ENCODE measurements at regions of chr1 and their contacts with region 1.

Region 1: DNA sequence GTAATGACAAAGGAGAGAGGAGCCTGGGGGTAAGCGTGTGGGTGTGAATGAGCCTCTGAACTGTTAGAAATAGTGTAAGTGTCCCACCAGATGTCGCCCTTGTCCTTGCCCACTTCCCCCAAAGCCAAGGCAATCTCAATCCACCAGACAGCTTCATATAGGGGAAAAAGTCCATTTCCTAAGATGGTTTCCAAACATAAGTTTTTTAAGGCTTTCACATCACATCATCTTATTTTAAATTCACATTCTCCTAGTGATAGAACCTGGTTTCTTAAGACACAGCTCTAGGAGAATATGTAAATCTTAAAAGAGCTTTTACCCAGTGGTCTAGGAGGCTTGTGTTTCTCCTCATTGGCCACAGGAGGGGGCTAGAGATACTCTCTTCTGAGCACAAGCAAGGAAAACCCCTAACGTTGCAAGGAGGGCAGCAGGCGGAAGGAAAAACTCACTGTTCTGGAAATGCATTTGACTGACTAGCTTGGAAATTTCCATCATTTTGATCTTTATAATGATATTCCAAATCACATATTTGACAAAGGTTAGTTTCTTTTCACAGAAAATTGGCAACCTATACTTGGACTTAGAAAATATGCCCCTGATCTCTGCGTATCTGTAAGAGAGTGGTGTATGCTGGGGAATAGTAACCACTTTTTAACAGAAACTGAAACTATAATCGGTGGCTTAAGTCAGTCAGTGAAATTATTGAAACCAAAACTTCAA is 51.9 kb upstream of the LPAR3 start:
- DNase-seq: peak; percentile 90
- ATAC-seq: peak; percentile 96
- H3K4me3 ChIP-seq: 0 out of 4 replicates have a peak overlapping the region, but pooled peaks of 1 of the 2 experiments have one; percentile 5
- H3K27ac ChIP-seq: peak overlapping the region; percentile 65; the same call in 1 of the 2 replicates
- H3K4me1 ChIP-seq: peaks cover 16 to 25% of the 10 kb centered on the region in 2 experiments
- H3K27me3 ChIP-seq: no peaks in the 10 kb centered on the region
- CTCF ChIP-seq: peak; percentile 70 to 99 (median 91)
- POLR2A ChIP-seq: no peak
- RAD21 ChIP-seq: peak; percentile 87

Region 2: DNA sequence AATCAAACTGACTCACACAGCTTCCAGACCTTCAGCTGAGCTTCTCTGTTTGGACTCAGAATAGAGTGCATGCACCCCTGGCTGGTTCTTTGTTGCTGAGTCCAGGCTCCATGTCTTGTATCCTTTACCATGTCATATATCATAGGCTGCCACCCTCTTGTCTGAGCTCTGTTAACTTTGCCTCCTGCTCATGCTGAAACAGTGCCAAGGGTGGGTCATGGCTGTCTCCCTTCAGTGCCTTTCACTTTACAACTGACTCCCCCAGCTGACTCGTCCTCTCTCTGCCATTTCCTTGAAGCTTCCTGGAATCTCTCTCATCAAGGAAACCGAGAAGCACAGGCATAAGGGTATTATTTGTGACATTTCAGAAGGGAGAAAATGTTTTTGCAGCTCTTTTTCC is 1831.3 kb before region 1 on chr1:
- CTCF ChIA-PET with region 1: no interaction called
- POLR2A ChIA-PET with region 1: no interaction called
- RAD21 ChIA-PET with region 1: no interaction called
- intact Hi-C with region 1: no loop called
- DNase-seq: no peak
- ATAC-seq: no peak
- H3K4me3 ChIP-seq: no peak overlapping the region
- H3K27ac ChIP-seq: no peak overlapping the region
- H3K4me1 ChIP-seq: no peaks in the 10 kb centered on the region
- H3K27me3 ChIP-seq: no peaks in the 10 kb centered on the region
- CTCF ChIP-seq: no peak
- POLR2A ChIP-seq: no peak
- RAD21 ChIP-seq: no peak

Region 3: DNA sequence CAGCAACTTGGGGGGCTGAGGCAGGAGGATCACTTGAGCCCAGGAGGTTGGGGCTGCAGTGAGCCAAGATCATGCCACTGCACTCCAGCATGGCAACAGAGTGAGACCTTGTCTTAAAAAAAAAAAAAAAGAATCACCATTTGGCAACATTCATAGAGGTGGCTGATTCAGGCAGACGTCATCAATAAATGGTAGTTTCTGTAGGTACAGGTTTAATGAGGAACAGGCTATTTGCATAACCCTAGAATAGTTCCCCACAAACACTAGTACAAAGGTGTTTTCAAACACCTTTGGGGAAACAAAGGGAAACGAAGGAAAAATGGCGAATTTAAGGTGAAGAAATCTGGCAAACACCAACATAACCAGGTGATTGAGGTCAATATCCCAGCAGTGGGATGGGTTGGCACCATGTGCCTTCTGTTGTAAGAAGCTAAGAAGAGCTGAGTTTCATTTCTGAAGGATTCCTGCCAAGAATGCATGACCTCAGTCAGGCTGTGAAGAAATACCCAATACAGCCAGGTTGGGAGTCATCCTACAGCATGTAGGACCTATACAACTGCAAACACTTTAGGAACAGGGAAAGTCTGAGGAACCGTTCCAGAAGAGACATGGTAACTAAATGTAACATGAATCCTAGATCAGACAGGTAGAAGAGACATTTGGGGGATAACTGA is 57.5 kb before region 1 on chr1:
- CTCF ChIA-PET with region 1: no interaction called
- POLR2A ChIA-PET with region 1: no interaction called
- RAD21 ChIA-PET with region 1: no interaction called
- intact Hi-C with region 1: no loop called
- DNase-seq: no peak
- ATAC-seq: no peak
- H3K4me3 ChIP-seq: no peak overlapping the region
- H3K27ac ChIP-seq: no peak overlapping the region
- H3K4me1 ChIP-seq: peaks cover 0 to 9% of the 10 kb centered on the region in 2 experiments; a peak in 1 of 4 replicates
- H3K27me3 ChIP-seq: no peaks in the 10 kb centered on the region
- CTCF ChIP-seq: no peak
- POLR2A ChIP-seq: no peak
- RAD21 ChIP-seq: no peak

Region 4: GRCh38 chr1:84957966-84958365 is 13.0 kb after region 1 on chr1:
- CTCF ChIA-PET with region 1: interaction called, 12 read pairs
- POLR2A ChIA-PET with region 1: no interaction called
- RAD21 ChIA-PET with region 1: interaction called in 1 of 2 experiments, 3 read pairs
- intact Hi-C with region 1: no loop called
- DNase-seq: no peak
- ATAC-seq: no peak
- H3K4me3 ChIP-seq: no peak overlapping the region
- H3K27ac ChIP-seq: no peak overlapping the region
- H3K4me1 ChIP-seq: no peaks in the 10 kb centered on the region
- H3K27me3 ChIP-seq: no peaks in the 10 kb centered on the region
- CTCF ChIP-seq: no peak
- POLR2A ChIP-seq: no peak
- RAD21 ChIP-seq: no peak

Region 5: GRCh38 chr1:85109475-85109874 is 164.5 kb after region 1 on chr1:
- CTCF ChIA-PET with region 1: interaction called, 33 read pairs
- POLR2A ChIA-PET with region 1: no interaction called
- RAD21 ChIA-PET with region 1: interaction called, 7 to 8 read pairs
- intact Hi-C with region 1: loop called (anchors 10 kb)
- DNase-seq: peak; percentile 53
- ATAC-seq: peak; percentile 100
- H3K4me3 ChIP-seq: no peak overlapping the region
- H3K27ac ChIP-seq: no peak overlapping the region
- H3K4me1 ChIP-seq: no peaks in the 10 kb centered on the region
- H3K27me3 ChIP-seq: no peaks in the 10 kb centered on the region
- CTCF ChIP-seq: peak; percentile 77 to 86 (median 85)
- POLR2A ChIP-seq: no peak
- RAD21 ChIP-seq: peak; percentile 89

Region 6: DNA sequence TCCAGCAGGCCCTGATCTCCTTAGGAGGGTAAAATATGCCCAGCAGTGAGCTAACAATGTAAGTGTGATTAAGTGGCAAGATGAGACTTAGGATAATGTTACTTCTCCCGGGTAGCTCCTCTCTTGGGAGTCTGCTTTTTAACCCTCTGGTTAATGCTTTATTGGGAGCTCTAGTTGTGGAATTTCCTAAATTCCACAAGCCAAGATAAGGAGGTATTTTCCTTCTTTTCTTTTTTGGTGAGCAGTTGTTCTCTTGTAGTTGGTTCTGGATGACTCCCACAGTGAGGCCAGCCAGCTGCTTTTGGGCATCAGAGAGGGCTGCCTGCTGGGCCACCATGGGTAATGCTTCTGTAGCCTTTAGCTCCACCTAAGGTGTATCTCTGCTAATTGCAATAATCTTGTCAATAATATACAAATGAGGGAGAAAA is 295.3 kb after region 1 on chr1:
- CTCF ChIA-PET with region 1: interaction called, 48 read pairs
- POLR2A ChIA-PET with region 1: interaction called, 3 read pairs
- RAD21 ChIA-PET with region 1: interaction called, 13 to 17 read pairs
- intact Hi-C with region 1: no loop called
- DNase-seq: no peak
- ATAC-seq: peak; percentile 90
- H3K4me3 ChIP-seq: no peak overlapping the region
- H3K27ac ChIP-seq: no peak overlapping the region
- H3K4me1 ChIP-seq: peaks cover 4 to 10% of the 10 kb centered on the region in 2 experiments; a peak in 3 of 4 replicates
- H3K27me3 ChIP-seq: no peaks in the 10 kb centered on the region
- CTCF ChIP-seq: peak; percentile 33 to 74 (median 42); a peak in 5 of 6 replicates
- POLR2A ChIP-seq: no peak
- RAD21 ChIP-seq: peak; percentile 87

Region 7: GRCh38 chr1:85259118-85259911 is 314.4 kb after region 1 on chr1 and contains the start of gene C1orf52:
- CTCF ChIA-PET with region 1: interaction called, 265 read pairs
- POLR2A ChIA-PET with region 1: interaction called, 16 read pairs
- RAD21 ChIA-PET with region 1: interaction called, 19 to 26 read pairs
- intact Hi-C with region 1: loop called (anchors 1 kb)
- DNase-seq: peak; percentile 84
- ATAC-seq: peak; percentile 96
- H3K4me3 ChIP-seq: peak within 1 kb of the TSS; percentile 83 to 84
- H3K27ac ChIP-seq: peak within 1 kb of the TSS; percentile 43
- H3K4me1 ChIP-seq: peaks cover 8 to 20% of the 10 kb centered on the region in 2 experiments; a peak in 3 of 4 replicates
- H3K27me3 ChIP-seq: no peaks in the 10 kb centered on the region
- CTCF ChIP-seq: peak; percentile 83 to 93 (median 93)
- POLR2A ChIP-seq: peak; percentile 63
- RAD21 ChIP-seq: peak; percentile 76
- total RNA-seq, gene C1orf52: 23.3 TPM

Measured in HCT116 (cell line).